CD4-positive, alpha-beta memory T cell (primary cell): ENCODE measurements at regions of chr11 and their contacts with region 1.

Region 1: GRCh38 chr11:60841797-60842667 is at the start of gene CCDC86:
- DNase-seq: peak; percentile 97 to 100 (median 98)
- H3K4me3 ChIP-seq: peak within 1 kb of the TSS; percentile 69 to 87
- H3K4me3 Mint-ChIP-seq: peak within 1 kb of the TSS; percentile 89 to 99 (median 96)
- H3K27ac ChIP-seq: peak within 1 kb of the TSS; percentile 68
- H3K27ac Mint-ChIP-seq: peak within 1 kb of the TSS; percentile 93 to 99 (median 97)
- H3K4me1 ChIP-seq: peaks cover 38% of the 10 kb centered on the region
- H3K4me1 Mint-ChIP-seq: peaks cover 31 to 53% (median 43%) of the 10 kb centered on the region in 4 donors
- H3K27me3 ChIP-seq: no peaks in the 10 kb centered on the region
- H3K27me3 Mint-ChIP-seq: no peaks in the 10 kb centered on the region
- total RNA-seq, gene CCDC86: 7.5 to 9.6 TPM

Region 2: GRCh38 chr11:60864856-60865513 is 23.0 kb after region 1 on chr11:
- CTCF ChIA-PET with region 1: no interaction called
- POLR2A ChIA-PET with region 1: no interaction called
- intact Hi-C with region 1: no loop called
- DNase-seq: no peak
- H3K4me3 ChIP-seq: no peak overlapping the region
- H3K4me3 Mint-ChIP-seq: peak overlapping the region in 1 of 8 donors; percentile 49
- H3K27ac ChIP-seq: no peak overlapping the region
- H3K27ac Mint-ChIP-seq: peak overlapping the region in 2 of 7 donors; percentile 47 to 58
- H3K4me1 ChIP-seq: no peaks in the 10 kb centered on the region
- H3K4me1 Mint-ChIP-seq: no peaks in the 10 kb centered on the region
- H3K27me3 ChIP-seq: no peaks in the 10 kb centered on the region
- H3K27me3 Mint-ChIP-seq: peaks cover 3% of the 10 kb centered on the region in 2 donors

Region 3: GRCh38 chr11:60906132-60906972 is 64.3 kb after region 1 on chr11 and contains the start of gene PRPF19:
- CTCF ChIA-PET with region 1: no interaction called
- POLR2A ChIA-PET with region 1: interaction called, 4 read pairs
- intact Hi-C with region 1: loop called (anchors 1 kb)
- DNase-seq: peak; percentile 99 to 100 (median 99)
- H3K4me3 ChIP-seq: peak within 1 kb of the TSS; percentile 85
- H3K4me3 Mint-ChIP-seq: peak within 1 kb of the TSS; percentile 82 to 94 (median 91)
- H3K27ac ChIP-seq: peak within 1 kb of the TSS; percentile 85
- H3K27ac Mint-ChIP-seq: peak within 1 kb of the TSS; percentile 94 to 99 (median 99)
- H3K4me1 ChIP-seq: peaks cover 38% of the 10 kb centered on the region
- H3K4me1 Mint-ChIP-seq: peaks cover 19 to 60% (median 38%) of the 10 kb centered on the region in 4 donors
- H3K27me3 ChIP-seq: no peaks in the 10 kb centered on the region
- H3K27me3 Mint-ChIP-seq: no peaks in the 10 kb centered on the region
- total RNA-seq, gene PRPF19: 97.4 to 99.2 TPM